Activated naive CD4-positive, alpha-beta T cell treated with anti-CD3 and anti-CD28 coated beads for 36 hours (primary cell): ENCODE measurements at regions of chr2 and their contacts with region 1.

Region 1: GRCh38 chr2:61016808-61017555 is 538 bp upstream of the PEX13 start:
- DNase-seq: peak; percentile 82
- H3K4me3 Mint-ChIP-seq: peak overlapping the region; percentile 98
- H3K27ac Mint-ChIP-seq: peak overlapping the region; percentile 95
- H3K4me1 Mint-ChIP-seq: peaks cover 43% of the 10 kb centered on the region
- H3K27me3 Mint-ChIP-seq: no peaks in the 10 kb centered on the region

Region 2: GRCh38 chr2:60614319-60614718 is 402.7 kb before region 1 on chr2:
- CTCF ChIA-PET with region 1: no interaction called
- intact Hi-C with region 1: no loop called
- DNase-seq: no peak
- H3K4me3 Mint-ChIP-seq: no peak overlapping the region
- H3K27ac Mint-ChIP-seq: no peak overlapping the region
- H3K4me1 Mint-ChIP-seq: no peaks in the 10 kb centered on the region
- H3K27me3 Mint-ChIP-seq: peaks cover 13% of the 10 kb centered on the region

Region 3: GRCh38 chr2:60756191-60757041 is 260.6 kb before region 1 on chr2 and contains the start of gene PAPOLG:
- CTCF ChIA-PET with region 1: interaction called, 3 read pairs
- intact Hi-C with region 1: loop called (anchors 1 kb)
- DNase-seq: peak; percentile 99
- H3K4me3 Mint-ChIP-seq: peak within 1 kb of the TSS; percentile 99
- H3K27ac Mint-ChIP-seq: peak within 1 kb of the TSS; percentile 97
- H3K4me1 Mint-ChIP-seq: peaks cover 40% of the 10 kb centered on the region
- H3K27me3 Mint-ChIP-seq: no peaks in the 10 kb centered on the region
- total RNA-seq, gene PAPOLG: 14.1 to 16.1 TPM

Region 4: GRCh38 chr2:60948926-60949579 is 67.9 kb before region 1 on chr2:
- CTCF ChIA-PET with region 1: no interaction called
- intact Hi-C with region 1: no loop called
- DNase-seq: no peak
- H3K4me3 Mint-ChIP-seq: no peak overlapping the region
- H3K27ac Mint-ChIP-seq: no peak overlapping the region
- H3K4me1 Mint-ChIP-seq: peaks cover 17% of the 10 kb centered on the region
- H3K27me3 Mint-ChIP-seq: no peaks in the 10 kb centered on the region

Region 5: GRCh38 chr2:61006486-61007105 is 10.4 kb before region 1 on chr2:
- CTCF ChIA-PET with region 1: no interaction called
- intact Hi-C with region 1: no loop called
- DNase-seq: no peak
- H3K4me3 Mint-ChIP-seq: no peak overlapping the region
- H3K27ac Mint-ChIP-seq: no peak overlapping the region
- H3K4me1 Mint-ChIP-seq: no peaks in the 10 kb centered on the region
- H3K27me3 Mint-ChIP-seq: no peaks in the 10 kb centered on the region

Region 6: DNA sequence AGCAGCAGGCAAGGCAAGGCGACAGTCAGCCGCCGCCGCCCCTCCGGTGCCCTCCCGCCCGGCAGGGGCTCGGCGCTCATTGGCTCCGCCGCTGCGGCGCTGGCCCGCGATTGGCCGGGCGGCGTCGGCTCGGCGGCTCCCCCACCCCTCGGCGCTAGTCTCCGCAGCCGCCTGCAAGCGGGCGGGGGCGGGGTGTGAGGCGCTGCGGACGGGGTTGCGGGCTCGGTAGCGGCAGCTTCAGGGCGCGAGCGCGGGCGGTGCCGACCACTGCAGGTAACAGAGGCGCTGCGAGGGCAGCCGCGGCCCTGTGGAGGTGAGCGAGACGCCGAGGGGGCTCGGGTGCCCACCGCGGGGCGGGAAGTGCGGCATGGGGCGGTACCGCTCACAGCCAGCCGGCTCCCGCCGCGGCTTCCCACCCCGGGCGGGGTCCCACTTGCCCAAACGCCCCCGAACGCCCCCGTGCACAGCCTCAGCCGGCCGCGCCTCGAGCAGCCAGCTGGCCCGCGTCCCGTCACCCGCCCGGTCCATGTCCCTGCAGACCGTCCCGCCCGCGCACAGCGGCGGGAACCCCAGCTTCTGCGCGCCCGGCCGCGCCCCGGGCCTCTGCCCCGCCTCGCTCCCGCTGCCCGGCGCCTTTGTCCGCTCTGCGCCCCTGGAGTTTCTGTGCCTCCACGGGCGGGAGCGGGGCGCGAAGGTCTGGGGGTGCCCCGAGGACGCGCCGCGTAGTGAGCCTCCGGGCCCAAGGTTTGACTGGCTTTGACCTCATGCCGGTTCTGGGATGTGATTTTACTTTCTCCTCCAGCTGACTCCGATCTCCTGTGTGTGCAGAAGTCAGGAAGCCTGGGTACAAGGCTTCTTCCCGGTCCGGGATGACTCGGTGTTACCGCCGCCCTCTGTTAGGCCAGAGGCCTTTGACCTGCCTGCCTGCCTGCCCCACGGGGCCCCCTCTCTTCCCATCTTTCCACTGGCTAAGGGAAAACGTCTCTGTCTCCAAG is 49.0 kb after region 1 on chr2 and contains the start of gene SANBR:
- CTCF ChIA-PET with region 1: no interaction called
- intact Hi-C with region 1: loop called (anchors 1 kb)
- DNase-seq: peak; percentile 83
- H3K4me3 Mint-ChIP-seq: peak within 1 kb of the TSS; percentile 84
- H3K27ac Mint-ChIP-seq: no peak within 1 kb of the TSS
- H3K4me1 Mint-ChIP-seq: peaks cover 8% of the 10 kb centered on the region
- H3K27me3 Mint-ChIP-seq: no peaks in the 10 kb centered on the region
- total RNA-seq, gene SANBR: 1.9 to 2.1 TPM

Region 7: DNA sequence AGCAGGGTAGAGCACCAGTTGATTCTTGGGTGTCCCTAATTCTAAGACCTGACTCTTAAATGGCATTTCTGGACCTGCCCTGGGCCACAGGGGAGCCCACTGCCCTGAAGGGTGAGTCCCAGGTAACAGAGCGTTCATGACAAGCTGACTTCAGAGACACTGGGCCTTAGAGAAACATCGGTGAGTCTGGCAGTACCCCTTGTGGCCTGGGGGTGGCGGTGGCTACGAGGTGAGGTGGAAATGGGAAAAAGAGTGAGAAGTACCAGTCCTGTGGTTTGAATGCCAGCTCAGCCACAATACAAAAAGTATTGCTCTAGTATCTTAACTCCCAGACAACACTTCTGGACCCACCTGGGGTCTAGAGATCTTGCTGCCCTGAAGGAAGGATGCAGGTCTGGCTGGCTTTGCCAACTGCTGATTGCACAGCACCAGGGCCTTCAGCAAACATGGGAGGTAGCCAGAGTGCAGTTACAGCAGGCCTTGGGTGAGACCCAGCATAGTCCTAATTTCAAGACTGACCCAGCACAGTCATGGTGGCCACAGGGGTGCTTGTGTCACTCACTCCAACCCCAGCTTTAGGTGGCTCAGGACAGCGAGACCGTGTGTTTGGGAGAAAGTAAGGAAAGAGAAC is 409.4 kb after region 1 on chr2:
- CTCF ChIA-PET with region 1: no interaction called
- intact Hi-C with region 1: loop called (anchors 5 kb)
- DNase-seq: peak; percentile 87
- H3K4me3 Mint-ChIP-seq: no peak overlapping the region
- H3K27ac Mint-ChIP-seq: peak overlapping the region; percentile 84
- H3K4me1 Mint-ChIP-seq: peaks cover 62% of the 10 kb centered on the region
- H3K27me3 Mint-ChIP-seq: no peaks in the 10 kb centered on the region

Region 8: DNA sequence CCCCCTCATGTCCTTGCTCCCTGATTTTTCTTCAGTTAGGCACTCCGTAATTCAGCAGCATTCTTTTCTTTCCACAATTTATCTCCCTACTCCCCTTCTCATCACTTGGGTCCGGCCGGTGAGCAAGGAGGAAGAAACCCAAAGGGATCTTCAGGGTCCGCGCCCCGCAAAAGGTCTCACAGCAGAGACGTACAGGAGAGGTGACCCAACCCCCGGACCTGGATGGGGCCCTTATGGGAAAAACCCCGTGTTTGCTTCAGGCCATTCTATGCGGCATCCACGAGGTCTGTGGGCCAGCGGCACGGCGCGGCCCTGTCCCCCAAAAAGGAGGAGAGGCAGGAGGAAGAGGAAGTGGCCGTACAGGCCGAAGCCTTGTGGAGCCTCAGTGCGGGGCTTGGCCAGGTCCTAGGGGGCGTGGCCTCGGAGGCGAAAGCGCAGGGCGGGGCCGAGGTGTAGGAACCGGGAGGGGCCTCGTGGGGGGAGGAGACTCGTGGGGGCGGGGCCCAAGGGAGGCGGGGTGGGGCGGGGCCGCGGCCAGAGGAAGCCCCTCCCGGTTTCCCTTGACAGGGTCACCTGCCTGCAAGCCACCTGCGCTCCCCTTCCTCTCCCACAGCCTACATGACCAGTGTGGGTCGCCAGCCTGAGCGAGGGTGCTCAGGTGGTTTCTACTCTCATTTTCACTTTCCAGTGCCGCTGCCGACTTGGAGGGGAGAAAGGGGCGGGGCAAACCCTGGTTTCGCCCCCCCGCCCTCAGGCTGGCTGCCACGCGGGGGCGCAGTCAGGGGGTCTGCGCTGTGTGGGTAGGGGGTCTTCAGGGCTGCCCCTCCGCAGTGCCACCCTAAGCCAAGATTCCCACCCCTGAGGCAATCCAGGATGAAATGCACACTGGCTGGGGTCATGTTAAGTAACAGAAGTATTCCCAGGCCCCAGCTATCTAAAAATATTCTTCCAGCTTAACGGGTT is 677.6 kb after region 1 on chr2:
- CTCF ChIA-PET with region 1: no interaction called
- intact Hi-C with region 1: loop called (anchors 1 kb)
- DNase-seq: peak; percentile 88
- H3K4me3 Mint-ChIP-seq: peak overlapping the region; percentile 86
- H3K27ac Mint-ChIP-seq: peak overlapping the region; percentile 59
- H3K4me1 Mint-ChIP-seq: peaks cover 11% of the 10 kb centered on the region
- H3K27me3 Mint-ChIP-seq: no peaks in the 10 kb centered on the region